Activated B cell treated with CpG ODN at 0.5 μM for 24 hours (primary cell): ENCODE measurements at regions of chr3 and their contacts with region 1.

Region 1: DNA sequence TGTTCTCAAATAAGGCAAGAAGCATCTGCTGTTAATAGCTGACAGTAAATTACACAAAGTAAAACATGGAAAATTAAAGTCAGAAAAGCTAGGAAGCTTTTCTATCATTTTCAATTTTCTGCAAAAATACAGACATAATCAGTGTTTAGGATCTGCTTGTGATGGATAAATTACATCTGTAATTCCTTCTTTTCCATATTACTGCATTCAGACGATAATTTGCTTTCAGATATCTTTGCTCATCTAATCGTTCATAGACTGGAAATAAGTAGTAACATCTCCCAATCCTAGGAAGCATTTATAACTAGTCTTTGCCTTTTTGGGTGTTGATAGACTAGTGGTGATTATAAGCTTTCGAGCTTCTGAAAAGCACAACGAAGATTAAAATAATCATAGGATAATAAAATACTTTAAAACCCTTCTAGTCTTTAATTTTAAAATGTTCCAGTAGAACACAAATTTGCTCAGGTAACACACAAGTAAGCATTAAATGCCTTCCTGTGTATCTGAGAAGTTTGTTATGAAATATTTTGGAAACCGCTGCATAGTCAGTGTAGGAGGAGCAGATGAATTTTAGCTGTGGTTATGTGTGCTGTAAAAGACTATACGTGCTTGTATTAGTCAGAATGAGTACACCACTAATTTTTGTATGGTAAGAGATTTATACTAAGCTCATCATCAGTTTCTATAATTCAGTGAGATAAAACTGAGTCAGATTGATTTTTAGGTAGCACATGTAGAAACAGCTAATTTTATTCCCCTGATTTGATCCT is 41.0 kb downstream of the MBNL1 start:
- DNase-seq: no peak
- ATAC-seq: peak; percentile 30
- H3K4me3 Mint-ChIP-seq: no peak overlapping the region
- H3K27ac Mint-ChIP-seq: no peak overlapping the region
- H3K4me1 Mint-ChIP-seq: peaks cover 61% of the 10 kb centered on the region
- H3K27me3 Mint-ChIP-seq: no peaks in the 10 kb centered on the region
- CTCF ChIP-seq: no peak

Region 2: DNA sequence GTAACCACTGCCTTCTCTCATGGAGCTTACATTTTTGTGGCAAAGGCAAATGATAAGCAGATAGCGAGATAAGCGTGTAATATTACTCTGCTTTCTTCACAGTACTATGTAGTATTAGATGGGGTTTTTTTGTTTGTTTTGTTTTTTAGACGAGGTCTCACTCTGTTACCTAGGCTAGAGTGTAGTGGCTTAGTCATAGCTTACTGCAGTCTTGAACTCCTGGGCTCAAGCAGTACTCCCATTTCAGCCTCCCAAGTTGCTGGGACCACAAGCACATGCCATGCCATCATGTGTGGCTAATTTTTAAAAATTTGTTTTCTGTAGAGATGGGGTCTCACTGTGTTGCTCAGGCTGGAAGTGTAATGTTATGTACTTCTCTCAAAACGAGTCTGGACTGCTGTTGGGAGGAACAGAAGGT is 18.1 kb before region 1 on chr3:
- CTCF ChIA-PET with region 1: no interaction called
- POLR2A ChIA-PET with region 1: interaction called, 3 read pairs
- intact Hi-C with region 1: loop called (anchors 2 kb)
- DNase-seq: no peak
- ATAC-seq: peak; percentile 50
- H3K4me3 Mint-ChIP-seq: peak overlapping the region; percentile 5
- H3K27ac Mint-ChIP-seq: peak overlapping the region; percentile 68
- H3K4me1 Mint-ChIP-seq: peaks cover 85% of the 10 kb centered on the region
- H3K27me3 Mint-ChIP-seq: no peaks in the 10 kb centered on the region
- CTCF ChIP-seq: no peak

Region 3: DNA sequence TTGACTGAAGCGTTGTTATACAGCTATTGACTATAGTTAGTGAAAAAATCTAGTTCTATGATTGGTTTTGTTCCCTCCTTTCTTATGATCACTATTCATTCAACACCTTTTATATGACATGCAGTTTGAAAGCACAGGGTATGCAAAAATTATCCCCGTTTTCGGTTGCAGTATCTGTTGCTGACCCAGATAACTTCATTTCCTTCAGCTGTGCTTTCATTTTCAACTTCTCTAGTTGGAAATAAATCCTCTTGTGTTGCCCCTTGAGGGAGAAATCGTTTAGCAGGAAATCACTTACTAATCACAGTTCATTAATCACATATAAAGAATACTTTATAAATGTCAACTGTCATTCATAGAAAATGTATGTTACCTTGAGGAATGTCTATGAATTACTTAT is 14.1 kb after region 1 on chr3:
- CTCF ChIA-PET with region 1: no interaction called
- POLR2A ChIA-PET with region 1: interaction called, 4 read pairs
- intact Hi-C with region 1: loop called (anchors 2 kb)
- DNase-seq: no peak
- ATAC-seq: peak; percentile 46
- H3K4me3 Mint-ChIP-seq: peak overlapping the region; percentile 50
- H3K27ac Mint-ChIP-seq: peak overlapping the region; percentile 19
- H3K4me1 Mint-ChIP-seq: peaks cover 66% of the 10 kb centered on the region
- H3K27me3 Mint-ChIP-seq: no peaks in the 10 kb centered on the region
- CTCF ChIP-seq: no peak